T-cell (primary cell): ENCODE measurements at regions of chr5 and their contacts with region 1.

Region 1: DNA sequence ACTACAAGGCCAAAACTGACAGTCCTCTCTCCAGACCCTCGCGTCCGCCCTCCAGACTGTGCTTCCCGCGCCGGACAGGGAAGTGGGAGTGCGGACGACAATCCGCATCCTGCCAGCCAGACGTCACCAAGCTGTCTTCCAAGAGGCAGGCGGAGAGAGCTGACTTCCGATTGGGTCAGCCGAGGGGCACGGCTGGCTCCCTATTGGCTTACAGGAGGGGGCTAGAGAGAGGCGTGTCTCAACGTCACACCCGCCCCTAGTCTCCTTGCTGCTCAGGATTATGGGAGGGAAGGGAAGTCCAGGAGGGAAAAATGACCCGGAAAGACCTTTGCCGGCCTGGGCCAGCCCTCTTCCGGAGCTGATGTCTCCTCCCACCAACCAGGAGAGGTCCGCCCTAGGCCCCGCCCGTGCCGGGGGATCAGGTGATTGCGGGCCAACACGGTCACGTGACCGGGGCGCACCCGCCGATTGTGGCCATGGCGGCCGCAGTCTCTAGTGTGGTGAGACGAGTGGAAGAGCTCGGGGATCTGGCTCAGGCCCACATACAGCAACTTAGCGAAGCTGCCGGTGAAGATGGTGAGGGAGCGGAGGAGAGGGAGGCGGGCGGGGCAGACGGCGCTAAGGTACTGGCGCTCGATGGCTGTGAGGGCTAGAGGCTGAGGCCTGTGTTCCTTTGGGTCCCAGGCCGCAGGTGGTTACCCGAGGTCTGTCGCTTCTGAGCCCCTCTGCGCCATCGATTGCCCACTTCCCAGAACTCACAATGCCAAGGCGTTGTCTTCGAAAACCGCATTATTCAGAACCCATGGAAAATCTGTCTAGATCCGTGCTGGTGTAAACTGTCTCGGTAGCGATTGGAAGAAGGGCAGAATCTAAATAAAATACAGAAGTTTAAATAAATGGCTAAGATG is at the start of gene RIMOC1:
- DNase-seq: peak; percentile 90 to 98 (median 94)
- ATAC-seq: peak; percentile 90 to 97 (median 95)
- H3K4me3 ChIP-seq: peak within 1 kb of the TSS; percentile 83 to 90
- H3K4me3 Mint-ChIP-seq: peak within 1 kb of the TSS; percentile 82 to 99 (median 98)
- H3K27ac ChIP-seq: peak within 1 kb of the TSS; percentile 85
- H3K27ac Mint-ChIP-seq: peak within 1 kb of the TSS; percentile 98 to 99
- H3K4me1 ChIP-seq: peaks cover 13 to 16% of the 10 kb centered on the region in 2 experiments
- H3K4me1 Mint-ChIP-seq: peaks cover 36 to 45% (median 43%) of the 10 kb centered on the region in 3 donors
- H3K27me3 ChIP-seq: peaks cover 0 to 2% of the 10 kb centered on the region in 2 experiments
- H3K27me3 Mint-ChIP-seq: peaks cover 0 to 4% of the 10 kb centered on the region in 2 donors
- total RNA-seq, gene RIMOC1: 15.0 to 30.4 (median 28.0) TPM

Region 2: GRCh38 chr5:41869739-41870626 is 34.2 kb before region 1 on chr5 and contains the start of gene OXCT1:
- CTCF ChIA-PET with region 1: interaction called in 1 of 2 experiments, 11 read pairs
- POLR2A ChIA-PET with region 1: interaction called, 5 to 6 read pairs
- DNase-seq: peak; percentile 81 to 98 (median 95)
- ATAC-seq: peak; percentile 93 to 96 (median 94)
- H3K4me3 ChIP-seq: peak within 1 kb of the TSS; percentile 71 to 93
- H3K4me3 Mint-ChIP-seq: peak within 1 kb of the TSS; percentile 88 to 91 (median 91)
- H3K27ac ChIP-seq: peak within 1 kb of the TSS; percentile 92
- H3K27ac Mint-ChIP-seq: peak within 1 kb of the TSS; percentile 93 to 95
- H3K4me1 ChIP-seq: peaks cover 11 to 21% of the 10 kb centered on the region in 2 experiments
- H3K4me1 Mint-ChIP-seq: peaks cover 53 to 57% (median 55%) of the 10 kb centered on the region in 3 donors
- H3K27me3 ChIP-seq: no peaks in the 10 kb centered on the region
- H3K27me3 Mint-ChIP-seq: no peaks in the 10 kb centered on the region
- total RNA-seq, gene OXCT1: 24.7 to 26.5 (median 26.0) TPM

Region 3: DNA sequence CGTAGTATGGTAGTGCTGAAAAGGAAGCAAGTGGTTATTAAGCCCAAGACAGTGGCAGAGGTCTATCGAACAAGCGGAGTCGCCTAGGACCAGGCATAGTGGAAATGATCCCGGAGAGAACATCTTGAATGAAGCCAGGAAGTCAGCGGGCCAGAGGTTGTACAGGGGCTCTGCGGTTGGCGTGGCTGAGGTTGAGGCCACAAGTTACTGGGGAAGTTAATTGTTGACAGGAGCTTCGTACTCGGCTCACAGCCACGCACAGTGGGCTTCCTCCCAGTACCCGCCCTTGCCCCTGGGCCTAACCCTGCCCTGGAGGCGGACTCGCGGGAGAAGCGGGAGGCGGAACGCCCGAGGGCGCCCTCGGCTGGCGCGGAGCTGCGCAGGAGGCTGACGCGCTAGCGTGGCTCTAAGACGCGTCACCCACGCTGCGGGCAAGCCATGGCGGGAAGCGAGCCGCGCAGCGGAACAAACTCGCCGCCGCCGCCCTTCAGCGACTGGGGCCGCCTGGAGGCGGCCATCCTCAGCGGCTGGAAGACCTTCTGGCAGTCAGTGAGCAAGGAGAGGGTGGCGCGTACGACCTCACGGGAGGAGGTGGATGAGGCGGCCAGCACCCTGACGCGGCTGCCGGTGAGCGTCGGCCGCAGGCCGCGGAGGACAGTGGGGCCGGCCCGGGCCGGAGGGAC is 20.9 kb after region 1 on chr5 and contains the start of gene FBXO4:
- CTCF ChIA-PET with region 1: interaction called, 8 to 13 read pairs
- POLR2A ChIA-PET with region 1: interaction called, 7 to 22 read pairs
- DNase-seq: peak; percentile 75 to 94 (median 88)
- ATAC-seq: peak; percentile 94 to 100 (median 98)
- H3K4me3 ChIP-seq: peak within 1 kb of the TSS; percentile 80 to 82
- H3K4me3 Mint-ChIP-seq: peak within 1 kb of the TSS; percentile 82 to 90 (median 90)
- H3K27ac ChIP-seq: peak within 1 kb of the TSS; percentile 91
- H3K27ac Mint-ChIP-seq: peak within 1 kb of the TSS; percentile 93 to 98
- H3K4me1 ChIP-seq: peaks cover 9 to 15% of the 10 kb centered on the region in 2 experiments
- H3K4me1 Mint-ChIP-seq: peaks cover 19 to 35% (median 29%) of the 10 kb centered on the region in 3 donors
- H3K27me3 ChIP-seq: no peaks in the 10 kb centered on the region
- H3K27me3 Mint-ChIP-seq: no peaks in the 10 kb centered on the region
- total RNA-seq, gene FBXO4: 11.3 to 17.3 (median 13.7) TPM